Activated B cell treated with CpG ODN at 0.5 μM for 24 hours (primary cell): ENCODE measurements at regions of chr2 and their contacts with region 1.

Region 1: GRCh38 chr2:241508240-241509154 is at the start of gene STK25:
- DNase-seq: peak; percentile 98
- ATAC-seq: peak; percentile 93
- H3K4me3 Mint-ChIP-seq: peak within 1 kb of the TSS; percentile 84
- H3K27ac Mint-ChIP-seq: peak within 1 kb of the TSS; percentile 68
- H3K4me1 Mint-ChIP-seq: peaks cover 23% of the 10 kb centered on the region
- H3K27me3 Mint-ChIP-seq: no peaks in the 10 kb centered on the region
- CTCF ChIP-seq: no peak
- total RNA-seq, gene STK25: 123 and 151 TPM in 2 replicates

Region 2: GRCh38 chr2:240566203-240567136 is 942.0 kb before region 1 on chr2:
- CTCF ChIA-PET with region 1: no interaction called
- POLR2A ChIA-PET with region 1: no interaction called
- intact Hi-C with region 1: loop called (anchors 5 kb)
- DNase-seq: peak; percentile 85
- ATAC-seq: peak; percentile 65
- H3K4me3 Mint-ChIP-seq: peak overlapping the region; percentile 88
- H3K27ac Mint-ChIP-seq: peak overlapping the region; percentile 96
- H3K4me1 Mint-ChIP-seq: peaks cover 85% of the 10 kb centered on the region
- H3K27me3 Mint-ChIP-seq: no peaks in the 10 kb centered on the region
- CTCF ChIP-seq: peak; percentile 56

Region 3: DNA sequence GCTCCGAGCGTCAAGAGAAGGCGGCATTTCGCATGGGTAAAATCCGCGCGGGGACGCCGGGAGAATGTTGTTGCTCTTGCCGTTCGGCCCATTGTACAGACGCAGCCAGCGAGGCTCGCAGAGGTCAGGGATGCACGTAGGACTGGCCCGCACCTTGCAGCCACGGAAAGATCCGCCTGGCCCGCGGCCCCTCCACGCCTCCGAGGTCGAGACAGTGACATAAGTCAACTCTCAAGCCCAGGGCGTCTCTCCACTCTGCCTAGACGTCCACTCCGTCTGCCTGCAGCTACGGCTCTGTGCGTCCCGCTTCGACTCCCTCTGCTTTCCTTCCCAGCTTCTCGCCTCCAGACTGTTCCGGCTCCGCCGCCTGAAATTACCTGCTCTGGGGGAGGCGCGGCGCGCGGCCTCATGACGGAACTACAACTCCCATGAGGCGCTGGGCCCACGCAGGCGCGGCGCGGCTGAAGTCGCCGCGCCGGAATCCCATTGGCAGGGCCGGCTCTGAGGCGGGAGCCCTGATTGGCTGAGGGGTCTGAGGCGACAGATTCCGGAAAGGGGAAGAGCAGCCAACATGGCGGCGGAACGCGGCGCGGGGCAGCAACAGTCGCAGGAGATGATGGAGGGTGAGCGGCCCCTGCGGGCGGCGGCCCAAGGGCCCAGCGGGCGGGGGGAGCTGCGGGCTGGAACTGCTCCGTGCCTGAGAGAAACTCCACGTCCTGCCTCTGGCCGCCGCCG is 358.4 kb before region 1 on chr2 and contains the start of gene PPP1R7:
- CTCF ChIA-PET with region 1: no interaction called
- POLR2A ChIA-PET with region 1: no interaction called
- intact Hi-C with region 1: loop called (anchors 1 kb)
- DNase-seq: peak; percentile 84
- ATAC-seq: peak; percentile 83
- H3K4me3 Mint-ChIP-seq: peak within 1 kb of the TSS; percentile 100
- H3K27ac Mint-ChIP-seq: peak within 1 kb of the TSS; percentile 95
- H3K4me1 Mint-ChIP-seq: peaks cover 26% of the 10 kb centered on the region
- H3K27me3 Mint-ChIP-seq: no peaks in the 10 kb centered on the region
- CTCF ChIP-seq: no peak
- total RNA-seq, gene PPP1R7: 72.0 and 74.5 TPM in 2 replicates

Region 4: GRCh38 chr2:241530571-241530970 is 22.1 kb after region 1 on chr2:
- CTCF ChIA-PET with region 1: no interaction called
- POLR2A ChIA-PET with region 1: no interaction called
- intact Hi-C with region 1: no loop called
- DNase-seq: no peak
- ATAC-seq: no peak
- H3K4me3 Mint-ChIP-seq: no peak overlapping the region
- H3K27ac Mint-ChIP-seq: no peak overlapping the region
- H3K4me1 Mint-ChIP-seq: no peaks in the 10 kb centered on the region
- H3K27me3 Mint-ChIP-seq: peaks cover 1% of the 10 kb centered on the region
- CTCF ChIP-seq: no peak

Region 5: DNA sequence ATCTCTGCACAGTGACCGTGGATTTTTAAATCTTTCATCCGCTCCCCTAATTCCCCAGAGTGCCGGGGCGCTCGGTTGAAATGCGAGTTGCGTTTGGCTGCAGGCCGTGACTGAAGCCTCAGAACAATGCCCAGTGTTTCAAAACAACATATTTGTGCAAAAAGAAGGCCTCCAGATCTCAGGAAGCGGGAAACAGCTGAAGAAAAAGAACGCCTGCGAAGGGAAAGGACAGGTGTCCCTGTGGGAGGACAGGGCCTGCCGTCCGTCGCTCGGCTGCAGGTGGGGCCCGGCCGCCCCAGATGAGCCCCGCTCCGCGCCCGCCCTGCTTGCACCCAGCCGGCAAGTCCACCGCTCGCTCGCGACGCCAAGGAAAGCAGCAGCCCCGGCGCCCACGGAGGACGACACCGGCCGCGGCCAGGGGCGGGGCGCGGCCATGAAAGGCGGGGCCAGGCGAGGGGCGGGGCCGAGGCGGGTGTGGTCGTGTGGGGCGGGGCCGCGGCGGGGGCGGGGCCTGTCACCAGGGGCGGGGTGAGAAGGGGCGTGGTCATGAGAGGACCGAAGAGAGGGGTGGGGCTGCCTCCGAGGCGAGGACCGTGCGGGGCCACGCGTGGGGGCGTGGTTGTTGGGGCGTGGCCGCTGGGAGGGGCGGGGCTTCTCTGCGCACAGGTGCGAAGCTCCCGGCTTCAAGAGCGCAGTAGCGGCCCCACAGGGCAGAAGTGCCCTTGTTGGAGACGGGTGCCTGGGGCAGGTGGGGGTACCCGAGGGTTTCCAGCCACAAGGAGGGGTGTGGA is 32.5 kb after region 1 on chr2:
- CTCF ChIA-PET with region 1: no interaction called
- POLR2A ChIA-PET with region 1: no interaction called
- intact Hi-C with region 1: loop called (anchors 2 kb)
- DNase-seq: peak; percentile 58
- ATAC-seq: peak; percentile 94
- H3K4me3 Mint-ChIP-seq: peak overlapping the region; percentile 75
- H3K27ac Mint-ChIP-seq: no peak overlapping the region
- H3K4me1 Mint-ChIP-seq: peaks cover 4% of the 10 kb centered on the region
- H3K27me3 Mint-ChIP-seq: peaks cover 17% of the 10 kb centered on the region
- CTCF ChIP-seq: no peak

Region 6: DNA sequence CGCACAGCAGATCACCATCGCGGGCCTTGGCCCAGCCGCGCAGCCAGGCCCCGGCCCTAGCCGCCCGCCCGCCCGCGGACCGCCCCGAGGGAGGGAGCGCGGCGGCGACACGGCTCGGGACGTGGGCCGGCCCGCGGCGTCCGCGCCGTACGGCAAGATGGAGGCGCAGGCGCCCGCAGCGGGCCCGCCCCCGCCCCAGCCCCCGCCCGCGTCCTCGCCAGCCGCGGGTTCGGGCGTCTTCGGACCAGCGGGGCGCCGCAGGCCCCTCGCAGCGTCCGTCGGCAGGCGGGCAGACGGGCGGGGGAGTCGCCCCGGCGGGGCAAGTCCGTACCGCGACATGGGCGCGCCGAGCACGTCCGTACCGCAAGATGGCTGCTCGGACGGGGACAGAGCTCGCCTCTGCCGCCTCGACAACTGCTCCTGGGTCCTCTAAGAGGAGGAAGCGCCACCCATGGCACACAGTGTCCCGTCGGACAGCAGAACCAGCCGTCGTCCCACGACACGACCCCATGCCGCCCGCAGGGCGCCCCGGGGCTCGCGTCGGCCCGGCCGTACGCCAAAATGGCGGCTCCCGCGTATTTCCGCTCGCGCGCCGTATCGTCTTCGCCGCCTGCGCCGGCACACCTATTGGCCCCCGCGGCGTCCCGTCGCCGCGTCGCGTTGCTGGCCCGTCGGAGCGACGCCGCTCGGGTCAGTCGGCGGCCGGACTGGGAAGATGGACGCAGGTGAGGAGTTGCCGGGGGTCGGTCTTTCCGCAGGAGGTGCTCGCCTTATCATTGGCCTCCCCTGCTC is 128.7 kb after region 1 on chr2 and contains the starts of genes ATG4B and THAP4:
- CTCF ChIA-PET with region 1: no interaction called
- POLR2A ChIA-PET with region 1: no interaction called
- intact Hi-C with region 1: loop called (anchors 1 kb)
- DNase-seq: peak; percentile 84
- ATAC-seq: peak; percentile 72
- H3K4me3 Mint-ChIP-seq: peak within 1 kb of the TSS; percentile 91
- H3K27ac Mint-ChIP-seq: peak within 1 kb of the TSS; percentile 83
- H3K4me1 Mint-ChIP-seq: peaks cover 45% of the 10 kb centered on the region
- H3K27me3 Mint-ChIP-seq: no peaks in the 10 kb centered on the region
- CTCF ChIP-seq: no peak
- total RNA-seq, gene ATG4B: 92.6 and 101 TPM in 2 replicates
- total RNA-seq, gene THAP4: 23.7 and 26.7 TPM in 2 replicates

Region 7: GRCh38 chr2:241702132-241703031 is 193.9 kb after region 1 on chr2:
- CTCF ChIA-PET with region 1: no interaction called
- POLR2A ChIA-PET with region 1: interaction called, 5 read pairs
- intact Hi-C with region 1: loop called (anchors 1 kb)
- DNase-seq: peak; percentile 93
- ATAC-seq: peak; percentile 73
- H3K4me3 Mint-ChIP-seq: peak overlapping the region; percentile 82
- H3K27ac Mint-ChIP-seq: peak overlapping the region; percentile 79
- H3K4me1 Mint-ChIP-seq: peaks cover 26% of the 10 kb centered on the region
- H3K27me3 Mint-ChIP-seq: no peaks in the 10 kb centered on the region
- CTCF ChIP-seq: no peak